GM12878 (cell line): ENCODE measurements at regions of chr7 and their contacts with region 1.

Region 1: DNA sequence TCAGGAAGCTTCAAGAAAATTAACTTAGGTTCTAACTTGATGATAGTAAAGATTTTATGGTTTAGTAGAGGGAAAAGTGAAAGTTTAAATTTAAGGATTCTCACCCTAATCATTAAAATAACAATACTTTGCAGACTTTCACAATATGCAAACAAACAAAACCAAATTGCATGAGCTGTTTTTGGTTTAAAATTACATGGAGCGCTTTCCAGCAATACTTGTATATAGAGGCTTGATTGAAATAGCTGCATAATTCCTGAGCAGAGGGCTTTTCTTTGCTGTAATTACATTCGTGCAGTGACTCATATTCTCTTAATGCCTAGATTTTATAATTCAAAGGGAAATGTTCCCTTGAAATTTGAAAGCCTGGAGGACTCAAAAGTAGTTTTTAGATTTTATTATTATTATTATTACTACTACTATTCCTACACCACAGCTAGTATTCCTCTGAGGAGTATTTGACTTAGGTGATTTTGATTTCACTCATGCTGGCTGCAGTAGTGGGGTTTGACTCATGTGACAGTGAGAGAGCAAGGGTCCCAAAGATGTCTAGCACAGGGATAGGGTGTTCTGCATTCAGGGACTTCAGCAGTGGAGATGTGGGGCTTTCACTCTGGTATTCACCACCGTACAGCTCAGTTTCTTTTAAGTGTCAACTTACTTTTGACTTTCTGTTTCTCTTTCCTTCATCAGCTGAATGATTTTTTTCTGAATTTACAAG is 138.1 kb downstream of the ADAM22 start:
- DNase-seq: peak; percentile 33
- ATAC-seq: peak; percentile 91
- H3K4me3 ChIP-seq: peak overlapping the region; percentile 22; the same call in 1 of the 2 replicates
- H3K27ac ChIP-seq: peak overlapping the region; percentile 64
- H3K4me1 ChIP-seq: peaks cover 6% of the 10 kb centered on the region; the same call in 1 of the 2 replicates
- H3K27me3 ChIP-seq: no peaks in the 10 kb centered on the region
- CTCF ChIP-seq: no peak
- EP300 ChIP-seq: no peak
- POLR2A ChIP-seq: no peak
- RAD21 ChIP-seq: no peak

Region 2: GRCh38 chr7:87528741-87529140 is 543.4 kb before region 1 on chr7:
- CTCF ChIA-PET with region 1: no interaction called
- POLR2A ChIA-PET with region 1: no interaction called
- RAD21 ChIA-PET with region 1: no interaction called
- SMC1A ChIA-PET with region 1: no interaction called
- in situ Hi-C with region 1: no loop called
- intact Hi-C with region 1: no loop called
- DNase-seq: no peak
- ATAC-seq: no peak
- H3K4me3 ChIP-seq: no peak overlapping the region
- H3K27ac ChIP-seq: no peak overlapping the region
- H3K4me1 ChIP-seq: no peaks in the 10 kb centered on the region
- H3K27me3 ChIP-seq: no peaks in the 10 kb centered on the region
- CTCF ChIP-seq: no peak
- EP300 ChIP-seq: no peak
- POLR2A ChIP-seq: no peak
- RAD21 ChIP-seq: no peak

Region 3: GRCh38 chr7:87933945-87934698 is 138.0 kb before region 1 on chr7 and contains the start of gene ADAM22:
- CTCF ChIA-PET with region 1: interaction called, 6 read pairs
- POLR2A ChIA-PET with region 1: interaction called, 4 read pairs
- RAD21 ChIA-PET with region 1: interaction called, 13 read pairs
- SMC1A ChIA-PET with region 1: interaction called, 12 read pairs
- in situ Hi-C with region 1: no loop called
- intact Hi-C with region 1: no loop called
- DNase-seq: peak; percentile 83
- ATAC-seq: peak; percentile 94
- H3K4me3 ChIP-seq: peak within 1 kb of the TSS; percentile 71
- H3K27ac ChIP-seq: peak within 1 kb of the TSS; percentile 60
- H3K4me1 ChIP-seq: no peaks in the 10 kb centered on the region; the same call in 1 of the 2 replicates
- H3K27me3 ChIP-seq: no peaks in the 10 kb centered on the region
- CTCF ChIP-seq: peak; percentile 14 to 46 (median 16); a peak in 3 of 6 replicates
- EP300 ChIP-seq: peak; percentile 16 to 57; a peak in 1 of 4 replicates
- POLR2A ChIP-seq: peak; percentile 97
- RAD21 ChIP-seq: peak; percentile 19; the same call in 1 of the 2 replicates
- polyA plus RNA-seq, gene ADAM22: 1.4 TPM

Region 4: DNA sequence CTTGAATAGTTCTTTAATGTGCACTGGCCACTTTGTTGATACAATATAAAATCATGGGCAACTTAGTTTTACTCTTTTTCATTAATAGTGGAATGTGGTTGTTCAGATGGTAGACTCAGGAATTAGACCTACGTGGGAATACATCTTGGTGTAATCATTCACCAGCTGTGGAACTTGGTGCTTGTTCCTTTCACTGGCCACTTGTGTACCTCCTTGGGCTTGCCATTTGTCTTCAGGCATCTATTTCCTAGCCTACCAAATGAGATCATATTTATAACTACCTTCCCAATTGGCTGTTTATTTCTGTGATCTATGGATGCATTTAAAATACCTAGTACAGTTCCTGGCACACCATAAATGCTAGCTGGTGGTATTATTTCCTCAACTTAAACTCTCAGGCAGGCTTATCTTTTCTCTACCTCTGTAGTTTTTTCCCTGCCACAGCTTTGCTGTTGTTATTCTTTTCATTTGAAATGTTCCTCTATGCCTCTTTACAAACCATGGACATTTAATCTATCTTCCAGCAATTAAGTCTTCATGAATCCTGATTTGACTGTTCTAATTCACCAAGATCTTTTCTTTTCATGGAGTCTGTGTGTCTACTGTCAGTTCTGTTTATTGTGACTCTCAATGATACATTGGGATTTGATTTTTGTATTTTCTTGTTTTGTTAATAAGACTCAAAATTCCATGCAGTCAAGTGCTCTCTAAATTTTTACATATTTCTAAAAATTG is 25.1 kb before region 1 on chr7:
- CTCF ChIA-PET with region 1: interaction called, 5 read pairs
- POLR2A ChIA-PET with region 1: interaction called, 4 read pairs
- RAD21 ChIA-PET with region 1: interaction called, 6 read pairs
- SMC1A ChIA-PET with region 1: interaction called, 11 read pairs
- in situ Hi-C with region 1: no loop called
- intact Hi-C with region 1: no loop called
- DNase-seq: no peak
- ATAC-seq: peak; percentile 46
- H3K4me3 ChIP-seq: no peak overlapping the region
- H3K27ac ChIP-seq: no peak overlapping the region; the same call in 1 of the 2 replicates
- H3K4me1 ChIP-seq: peaks cover 5% of the 10 kb centered on the region
- H3K27me3 ChIP-seq: no peaks in the 10 kb centered on the region
- CTCF ChIP-seq: no peak
- EP300 ChIP-seq: no peak
- POLR2A ChIP-seq: no peak
- RAD21 ChIP-seq: no peak

Region 5: DNA sequence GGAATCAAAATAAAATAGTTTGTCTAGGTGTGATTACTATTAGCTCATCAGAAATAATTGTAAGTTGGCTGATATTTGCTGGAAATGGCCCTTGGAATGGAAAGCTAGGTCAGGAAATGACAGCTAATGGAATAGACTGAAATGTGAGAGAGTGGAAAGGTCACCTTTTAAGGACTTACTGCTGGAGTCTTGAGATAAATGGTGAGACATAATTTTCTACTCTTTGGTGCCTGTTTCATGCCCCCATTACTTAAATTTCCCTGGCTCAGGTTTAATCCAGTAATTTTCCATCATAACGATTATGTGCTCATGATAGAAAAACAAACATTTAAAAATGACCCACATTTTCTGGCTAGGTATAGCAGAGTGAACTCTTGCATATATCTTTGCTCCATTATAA is 14.5 kb before region 1 on chr7:
- CTCF ChIA-PET with region 1: interaction called, 6 read pairs
- POLR2A ChIA-PET with region 1: interaction called, 6 read pairs
- RAD21 ChIA-PET with region 1: no interaction called
- SMC1A ChIA-PET with region 1: interaction called, 19 read pairs
- in situ Hi-C with region 1: no loop called
- intact Hi-C with region 1: no loop called
- DNase-seq: no peak
- ATAC-seq: no peak
- H3K4me3 ChIP-seq: no peak overlapping the region
- H3K27ac ChIP-seq: no peak overlapping the region
- H3K4me1 ChIP-seq: no peaks in the 10 kb centered on the region
- H3K27me3 ChIP-seq: no peaks in the 10 kb centered on the region
- CTCF ChIP-seq: no peak
- EP300 ChIP-seq: no peak
- POLR2A ChIP-seq: no peak
- RAD21 ChIP-seq: no peak

Region 6: GRCh38 chr7:88090671-88091070 is 18.5 kb after region 1 on chr7:
- CTCF ChIA-PET with region 1: interaction called, 9 read pairs
- POLR2A ChIA-PET with region 1: interaction called, 6 read pairs
- RAD21 ChIA-PET with region 1: interaction called, 19 read pairs
- SMC1A ChIA-PET with region 1: interaction called, 11 read pairs
- in situ Hi-C with region 1: no loop called
- intact Hi-C with region 1: no loop called
- DNase-seq: no peak
- ATAC-seq: peak; percentile 87
- H3K4me3 ChIP-seq: no peak overlapping the region
- H3K27ac ChIP-seq: no peak overlapping the region
- H3K4me1 ChIP-seq: no peaks in the 10 kb centered on the region; the same call in 1 of the 2 replicates
- H3K27me3 ChIP-seq: no peaks in the 10 kb centered on the region
- CTCF ChIP-seq: no peak
- EP300 ChIP-seq: no peak
- POLR2A ChIP-seq: no peak
- RAD21 ChIP-seq: no peak